Heart right ventricle (tissue), 16 donors: ENCODE measurements at regions of chr1 and their contacts with region 1.

Region 1: GRCh38 chr1:201476670-201477344 is 7.8 kb upstream of the PHLDA3 start:
- DNase-seq: no peak
- ATAC-seq: no peak
- H3K4me3 ChIP-seq: no peak overlapping the region
- H3K27ac ChIP-seq: no peak overlapping the region
- H3K4me1 ChIP-seq: peaks cover 9 to 29% (median 20%) of the 10 kb centered on the region in 9 donors
- H3K27me3 ChIP-seq: peaks cover 0 to 7% (median 0%) of the 10 kb centered on the region in 7 donors
- CTCF ChIP-seq: no peak

Region 2: DNA sequence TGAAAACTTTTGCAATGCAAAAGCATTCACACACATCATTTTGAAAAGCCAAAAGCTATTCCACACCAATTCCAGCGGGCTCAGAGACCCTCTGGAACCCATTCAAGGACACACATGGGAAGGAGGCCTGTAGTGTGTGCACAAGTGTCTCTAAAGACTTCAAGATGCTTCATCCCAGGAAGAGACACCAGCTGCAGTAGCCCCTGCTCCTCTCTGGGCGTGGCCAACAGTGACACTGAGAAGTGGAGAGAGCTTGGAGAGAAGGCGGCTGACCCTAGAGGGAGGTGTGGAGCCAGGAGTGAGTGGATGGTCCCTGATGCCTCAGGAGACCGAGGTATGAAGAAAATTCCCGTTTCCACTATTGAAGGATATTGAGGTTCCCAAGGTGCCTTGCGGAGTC is 40.4 kb before region 1 on chr1:
- intact Hi-C with region 1: loop called in 1 of 10 experiments (anchors 5 kb)
- DNase-seq: no peak
- ATAC-seq: peak in 6 of 8 donors; percentile 24 to 63 (median 31)
- H3K4me3 ChIP-seq: no peak overlapping the region
- H3K27ac ChIP-seq: no peak overlapping the region
- H3K4me1 ChIP-seq: peaks cover 0 to 12% (median 10%) of the 10 kb centered on the region in 9 donors
- H3K27me3 ChIP-seq: peaks cover 0 to 4% (median 0%) of the 10 kb centered on the region in 7 donors
- CTCF ChIP-seq: peak in 1 of 9 donors; percentile 8

Region 3: GRCh38 chr1:201495471-201496295 is 18.9 kb after region 1 on chr1:
- intact Hi-C with region 1: no loop called
- DNase-seq: peak; percentile 82
- ATAC-seq: peak; percentile 64 to 87 (median 74)
- H3K4me3 ChIP-seq: peak overlapping the region in 1 of 10 donors; percentile 5
- H3K27ac ChIP-seq: peak overlapping the region; percentile 61 to 82 (median 75)
- H3K4me1 ChIP-seq: peaks cover 17 to 98% (median 84%) of the 10 kb centered on the region in 9 donors
- H3K27me3 ChIP-seq: no peaks in the 10 kb centered on the region
- CTCF ChIP-seq: no peak